ENCODE measurements at regions of chr3 and their contacts with region 1.

Region 1: DNA sequence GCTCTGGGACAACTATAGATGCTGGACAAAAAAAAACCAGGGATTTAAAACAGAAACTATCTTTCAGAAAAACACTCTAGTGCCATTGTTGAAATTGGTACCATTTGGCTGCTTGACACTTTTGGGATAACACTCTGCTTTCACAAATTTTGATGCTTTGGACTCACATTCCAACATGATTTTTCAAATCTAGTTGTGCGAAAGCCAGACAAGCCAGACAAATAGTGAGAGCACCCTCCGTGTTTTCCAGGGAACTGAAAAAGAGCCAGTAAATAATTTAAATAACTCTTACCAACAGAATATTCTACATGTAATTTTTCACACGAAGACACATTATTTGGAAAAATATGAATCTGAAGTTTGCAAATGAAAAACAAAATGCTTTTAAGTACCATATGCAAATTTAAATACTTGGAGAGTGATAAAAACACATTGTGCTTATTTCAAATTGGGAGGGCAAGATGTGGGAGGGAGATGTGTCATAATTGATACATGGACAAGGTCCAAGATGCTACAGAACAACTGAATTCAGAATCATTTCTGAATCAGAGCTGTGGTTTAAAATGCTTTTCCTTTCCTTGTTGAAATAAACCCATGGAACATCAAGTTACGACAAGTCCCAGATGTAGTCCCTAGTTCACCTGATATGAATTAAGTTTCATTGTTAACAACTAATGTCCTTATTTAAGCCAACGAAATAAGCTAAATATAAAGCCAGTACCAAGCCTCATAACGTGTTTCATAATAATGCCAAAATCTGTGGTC is 144.2 kb upstream of the SOX2 start:
- DNase-seq: no peak
- H3K4me3 ChIP-seq: no peak overlapping the region
- H3K27ac ChIP-seq: no peak overlapping the region
- H3K4me1 ChIP-seq: no peaks in the 10 kb centered on the region
- H3K27me3 ChIP-seq: no peaks in the 10 kb centered on the region
- CTCF ChIP-seq: no peak

Region 2: DNA sequence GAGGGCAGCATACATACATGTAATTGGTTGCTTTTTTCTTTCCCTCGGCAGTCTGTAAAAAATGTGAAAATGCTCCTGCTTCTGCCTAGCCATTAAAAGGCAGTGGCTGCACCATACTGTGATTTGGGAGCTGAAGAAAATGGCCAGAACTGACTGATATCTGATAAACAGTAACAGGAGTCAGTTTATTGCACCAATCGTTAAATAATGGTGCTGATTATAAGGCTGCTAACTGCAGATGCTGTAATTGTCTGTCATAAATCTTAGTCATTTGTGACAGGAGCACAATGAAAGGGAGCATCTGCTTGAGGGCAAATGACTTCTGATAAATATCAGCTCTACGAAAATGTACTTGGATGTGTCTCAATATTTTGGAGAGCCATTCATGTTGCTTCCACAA is 314.9 kb before region 1 on chr3:
- CTCF ChIA-PET with region 1: no interaction called
- POLR2A ChIA-PET with region 1: no interaction called
- intact Hi-C with region 1: no loop called
- DNase-seq: no peak
- H3K4me3 ChIP-seq: no peak overlapping the region
- H3K27ac ChIP-seq: no peak overlapping the region
- H3K4me1 ChIP-seq: no peaks in the 10 kb centered on the region
- H3K27me3 ChIP-seq: no peaks in the 10 kb centered on the region
- CTCF ChIP-seq: no peak

Region 3: DNA sequence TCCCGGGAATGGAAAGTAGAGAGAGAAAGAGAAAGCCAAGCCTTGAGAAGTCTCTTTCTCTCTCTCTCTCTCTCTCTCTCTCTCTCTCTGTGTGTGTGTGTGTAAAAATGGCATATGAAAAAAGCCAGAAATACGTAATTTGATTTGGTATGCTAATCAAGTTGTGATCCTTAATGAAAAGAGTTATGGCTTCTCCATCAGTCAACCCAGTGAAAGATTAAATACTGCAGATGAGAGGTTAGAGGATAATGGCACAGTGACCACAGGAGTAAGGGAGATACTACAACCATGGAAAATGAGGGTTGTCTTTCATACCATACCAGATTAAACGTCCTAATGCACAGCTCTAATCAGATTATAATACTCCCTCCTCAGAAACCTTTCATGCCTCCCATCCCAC is 49.3 kb before region 1 on chr3:
- CTCF ChIA-PET with region 1: no interaction called
- POLR2A ChIA-PET with region 1: no interaction called
- intact Hi-C with region 1: no loop called
- DNase-seq: no peak
- H3K4me3 ChIP-seq: no peak overlapping the region
- H3K27ac ChIP-seq: no peak overlapping the region
- H3K4me1 ChIP-seq: no peaks in the 10 kb centered on the region
- H3K27me3 ChIP-seq: no peaks in the 10 kb centered on the region
- CTCF ChIP-seq: no peak

Region 4: GRCh38 chr3:181694805-181695660 is 127.5 kb after region 1 on chr3:
- CTCF ChIA-PET with region 1: interaction called, 9 read pairs
- POLR2A ChIA-PET with region 1: no interaction called
- intact Hi-C with region 1: loop called (anchors 5 kb)
- DNase-seq: peak in 1 of 2 experiments; percentile 57
- H3K4me3 ChIP-seq: peak overlapping the region; percentile 52; the same call in 1 of the 2 replicates
- H3K27ac ChIP-seq: no peak overlapping the region
- H3K4me1 ChIP-seq: no peaks in the 10 kb centered on the region; the same call in 1 of the 2 replicates
- H3K27me3 ChIP-seq: peaks cover 36% of the 10 kb centered on the region; the same call in 1 of the 2 replicates
- CTCF ChIP-seq: no peak; the same call in 1 of the 2 replicates